Ascending aorta (tissue), 2 donors: ENCODE measurements at regions of chr10 and their contacts with region 1.

Region 1: DNA sequence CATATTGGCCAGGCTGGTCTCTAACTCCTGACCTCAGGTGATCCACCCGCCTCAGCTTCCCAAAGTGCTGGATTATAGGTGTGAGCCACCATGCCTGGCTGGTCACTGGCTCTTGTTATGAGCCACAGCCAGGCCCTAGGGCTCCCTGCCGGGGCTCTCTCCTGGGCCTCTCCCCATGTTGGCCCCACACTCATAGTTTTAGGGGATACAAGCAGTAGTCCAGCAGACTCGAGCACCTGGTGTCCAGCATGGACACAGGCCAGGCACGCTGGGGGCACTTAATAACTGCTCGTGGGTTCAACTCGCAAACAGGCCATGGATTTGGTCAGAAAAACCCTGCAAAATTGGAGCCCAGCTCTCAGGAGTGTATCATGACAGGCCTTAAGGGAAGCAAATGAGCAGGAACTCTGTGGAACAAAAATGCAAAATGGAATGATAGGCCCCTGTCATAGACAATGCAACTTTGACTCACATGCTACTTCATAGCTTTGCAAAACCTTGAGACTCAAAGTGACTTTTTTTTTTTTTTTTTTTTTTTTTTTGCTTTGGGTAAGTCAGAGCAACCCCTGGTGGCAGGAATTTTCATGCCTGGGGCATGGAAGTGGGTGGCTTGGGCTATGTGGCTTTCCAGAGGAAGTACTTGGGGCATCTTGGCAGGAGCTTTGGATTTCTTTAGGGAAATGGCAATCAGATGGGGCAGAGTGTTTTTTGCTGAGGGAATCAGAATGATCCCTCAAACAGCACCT is 62.5 kb downstream of the TACC2 start:
- DNase-seq: peak in 1 of 2 donors; percentile 84
- H3K4me3 ChIP-seq: no peak overlapping the region
- H3K27ac ChIP-seq: peak overlapping the region; percentile 24 to 70
- H3K4me1 ChIP-seq: peaks cover 3 to 4% of the 10 kb centered on the region in 2 donors
- H3K27me3 ChIP-seq: no peaks in the 10 kb centered on the region
- CTCF ChIP-seq: peak; percentile 15 to 67 (median 67)

Region 2: DNA sequence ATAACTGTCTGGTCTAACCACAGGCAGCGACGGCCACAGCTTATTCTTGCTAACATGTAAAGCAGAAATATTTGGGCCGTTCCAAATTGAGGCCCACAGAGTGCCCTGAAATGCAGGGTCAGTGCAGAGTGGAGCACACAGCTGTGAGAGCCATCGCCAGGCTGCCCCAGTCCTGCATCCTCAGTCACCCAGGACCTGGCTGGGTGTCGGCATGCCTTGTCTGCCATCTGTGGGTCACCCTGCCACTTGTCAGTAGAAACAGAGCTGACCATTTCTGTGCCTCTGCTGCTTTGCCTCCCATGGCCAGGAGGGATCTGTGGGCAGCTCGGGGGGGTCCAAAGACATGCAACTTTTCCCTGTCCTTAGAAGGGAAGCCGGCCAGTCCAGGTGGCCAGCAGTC is 162.3 kb after region 1 on chr10:
- intact Hi-C with region 1: loop called (anchors 10 kb)
- DNase-seq: no peak
- H3K4me3 ChIP-seq: no peak overlapping the region
- H3K27ac ChIP-seq: no peak overlapping the region
- H3K4me1 ChIP-seq: no peaks in the 10 kb centered on the region
- H3K27me3 ChIP-seq: no peaks in the 10 kb centered on the region
- CTCF ChIP-seq: peak in 1 of 3 experiments; percentile 6